Activated T-helper 2 cell treated with anti-CD3 and anti-CD28 coated beads, Interferon-gamma antibody, Interleukin-2, Interleukin-4, amounts not matched to agents 10 μg/mL and 5 μg/mL and 100 μg/mL, durations not matched to agents 14 hours and 24 hours and 36 hours (primary cell): ENCODE measurements at regions of chr11 and their contacts with region 1.

Region 1: GRCh38 chr11:4636962-4637661 is at the start of gene OR51D1:
- DNase-seq: peak; percentile 48
- H3K4me3 Mint-ChIP-seq: no peak within 1 kb of the TSS
- H3K27ac Mint-ChIP-seq: no peak within 1 kb of the TSS
- H3K4me1 Mint-ChIP-seq: no peaks in the 10 kb centered on the region
- H3K27me3 Mint-ChIP-seq: no peaks in the 10 kb centered on the region
- total RNA-seq, gene OR51D1: not detected in 2 replicates

Region 2: DNA sequence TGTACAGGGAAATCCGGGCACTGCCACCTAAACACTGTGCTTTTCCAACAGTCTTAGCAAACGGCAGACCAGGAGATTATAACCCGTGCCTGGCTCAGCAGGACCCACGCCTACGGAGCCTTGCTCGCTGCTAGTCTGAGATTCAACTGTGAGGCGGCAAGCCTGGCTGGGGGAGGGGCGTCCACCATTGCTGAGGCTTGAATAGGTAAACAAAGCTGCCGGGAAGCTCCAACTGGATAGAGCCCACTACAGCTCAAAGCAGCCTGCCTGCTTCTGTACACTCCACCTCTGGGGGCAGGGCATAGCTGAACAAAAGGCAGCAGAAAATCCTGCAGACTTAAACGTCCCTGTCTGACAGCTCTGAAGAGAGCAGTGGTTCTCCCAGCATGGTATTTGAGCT is 105.4 kb before region 1 on chr11:
- intact Hi-C with region 1: no loop called
- DNase-seq: no peak
- H3K4me3 Mint-ChIP-seq: no peak overlapping the region
- H3K27ac Mint-ChIP-seq: no peak overlapping the region
- H3K4me1 Mint-ChIP-seq: no peaks in the 10 kb centered on the region
- H3K27me3 Mint-ChIP-seq: peaks cover 3% of the 10 kb centered on the region

Region 3: GRCh38 chr11:4626207-4627099 is 10.7 kb before region 1 on chr11:
- intact Hi-C with region 1: no loop called
- DNase-seq: peak; percentile 34
- H3K4me3 Mint-ChIP-seq: no peak overlapping the region
- H3K27ac Mint-ChIP-seq: no peak overlapping the region
- H3K4me1 Mint-ChIP-seq: no peaks in the 10 kb centered on the region
- H3K27me3 Mint-ChIP-seq: peaks cover 23% of the 10 kb centered on the region

Region 4: DNA sequence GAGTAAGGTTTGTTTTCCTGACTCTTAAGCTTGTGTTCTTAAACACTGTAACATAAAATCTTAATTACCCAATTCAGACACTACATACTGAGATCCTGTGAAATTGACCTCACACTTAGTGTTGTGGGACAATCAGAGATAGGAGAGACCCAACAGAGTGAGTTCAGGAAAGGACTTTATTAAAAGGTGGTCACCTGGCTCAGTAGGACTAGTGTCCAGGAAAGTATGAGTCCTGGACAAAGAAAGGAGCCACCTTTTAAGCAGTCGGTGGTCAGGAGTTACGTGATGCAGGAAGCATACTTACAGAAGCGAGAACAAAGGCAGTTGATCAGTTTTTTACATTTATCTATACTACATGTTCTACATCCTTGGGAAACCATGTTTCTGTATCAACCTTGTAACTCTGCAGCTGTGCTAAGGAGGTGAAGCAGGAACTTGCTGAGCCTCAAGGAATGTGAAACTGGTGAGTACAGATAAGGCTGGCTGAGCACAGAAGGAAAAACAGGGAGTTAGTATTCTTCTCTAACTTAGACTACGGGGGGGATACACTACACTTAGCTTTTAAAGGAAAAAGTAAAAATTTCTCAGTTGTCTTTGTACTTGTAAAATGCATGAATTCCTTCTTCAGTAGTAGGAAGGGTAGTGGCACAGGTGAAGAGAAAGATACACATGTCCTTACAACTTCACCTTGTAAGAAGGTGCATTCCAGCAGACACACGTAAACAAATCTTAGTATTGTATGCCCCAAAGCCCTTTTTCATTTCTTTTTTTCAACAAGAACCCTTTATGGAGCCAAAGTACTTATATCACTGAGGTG is 21.7 kb after region 1 on chr11:
- intact Hi-C with region 1: no loop called
- DNase-seq: no peak
- H3K4me3 Mint-ChIP-seq: no peak overlapping the region
- H3K27ac Mint-ChIP-seq: no peak overlapping the region
- H3K4me1 Mint-ChIP-seq: peaks cover 4% of the 10 kb centered on the region
- H3K27me3 Mint-ChIP-seq: peaks cover 2% of the 10 kb centered on the region

Region 5: DNA sequence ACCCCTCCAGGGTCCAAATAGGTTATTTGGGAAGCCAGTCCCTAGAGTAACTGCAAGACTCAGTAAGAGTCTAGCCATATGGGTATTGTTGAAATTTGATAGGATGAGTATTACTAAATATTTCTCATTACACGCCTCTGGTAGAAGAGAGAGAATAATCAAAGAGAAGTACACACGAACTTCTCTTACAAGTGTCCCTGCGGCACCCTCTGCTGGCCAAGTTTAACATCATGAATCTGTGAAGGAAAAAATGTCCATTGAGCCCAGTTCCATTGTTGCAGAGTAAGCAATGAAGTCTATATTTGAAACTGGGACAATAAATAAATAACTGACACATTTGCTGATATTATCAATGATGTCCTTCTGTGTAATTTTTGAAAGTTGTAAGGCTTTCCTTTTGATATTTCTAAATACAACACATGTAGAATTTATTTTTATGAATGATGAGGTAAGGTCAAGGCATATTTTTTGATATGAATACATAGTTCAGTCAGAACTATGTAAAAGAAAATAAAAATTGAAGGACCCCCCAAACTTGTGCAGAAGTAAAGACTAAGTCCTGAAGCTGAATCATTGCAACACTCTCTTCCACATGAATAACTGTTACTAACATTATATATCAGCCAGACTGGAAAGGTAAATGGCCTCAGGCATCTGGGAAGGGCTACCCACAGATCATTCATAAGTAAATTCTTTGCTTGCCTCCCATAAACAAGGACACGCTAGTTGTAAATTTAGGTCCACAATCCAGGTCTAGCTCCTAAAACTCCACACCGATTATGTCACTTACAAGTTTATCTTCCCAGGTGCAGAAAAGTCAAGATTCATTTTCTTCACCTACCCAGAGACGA is 367.5 kb after region 1 on chr11:
- intact Hi-C with region 1: loop called (anchors 2 kb)
- DNase-seq: no peak
- H3K4me3 Mint-ChIP-seq: no peak overlapping the region
- H3K27ac Mint-ChIP-seq: no peak overlapping the region
- H3K4me1 Mint-ChIP-seq: no peaks in the 10 kb centered on the region
- H3K27me3 Mint-ChIP-seq: no peaks in the 10 kb centered on the region

Region 6: DNA sequence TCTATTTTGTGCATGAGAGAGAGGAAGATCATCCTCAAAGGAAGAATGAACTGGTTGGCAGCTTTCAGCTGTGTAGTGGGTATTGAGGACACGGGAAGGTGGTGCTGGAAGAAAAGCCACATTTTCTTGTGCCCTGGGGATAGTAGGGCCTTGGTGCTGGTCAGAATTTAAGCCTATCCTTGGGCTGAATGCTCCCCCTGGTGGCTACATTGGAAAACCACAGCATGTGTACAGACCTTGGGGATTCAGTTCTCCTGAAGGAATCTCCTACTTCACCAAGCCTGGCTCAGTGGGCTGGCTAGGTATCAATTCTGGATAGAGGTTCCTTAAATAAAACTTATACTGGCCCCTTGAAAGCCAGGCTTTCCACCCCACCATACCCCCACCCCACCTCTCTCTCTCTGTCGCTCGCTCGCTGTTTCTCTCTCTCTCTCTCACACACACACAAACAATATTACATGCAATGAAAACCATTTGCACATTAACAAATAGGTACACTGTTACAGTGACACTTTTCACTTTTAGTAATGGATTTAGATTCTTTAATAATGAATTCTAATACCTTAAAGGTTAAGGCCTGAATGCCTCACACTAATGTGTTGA is 743.7 kb after region 1 on chr11:
- intact Hi-C with region 1: loop called (anchors 5 kb)
- DNase-seq: no peak
- H3K4me3 Mint-ChIP-seq: no peak overlapping the region
- H3K27ac Mint-ChIP-seq: no peak overlapping the region
- H3K4me1 Mint-ChIP-seq: no peaks in the 10 kb centered on the region
- H3K27me3 Mint-ChIP-seq: no peaks in the 10 kb centered on the region